Tibial artery (tissue), 4 donors: ENCODE measurements at regions of chr19 and their contacts with region 1.

Region 1: DNA sequence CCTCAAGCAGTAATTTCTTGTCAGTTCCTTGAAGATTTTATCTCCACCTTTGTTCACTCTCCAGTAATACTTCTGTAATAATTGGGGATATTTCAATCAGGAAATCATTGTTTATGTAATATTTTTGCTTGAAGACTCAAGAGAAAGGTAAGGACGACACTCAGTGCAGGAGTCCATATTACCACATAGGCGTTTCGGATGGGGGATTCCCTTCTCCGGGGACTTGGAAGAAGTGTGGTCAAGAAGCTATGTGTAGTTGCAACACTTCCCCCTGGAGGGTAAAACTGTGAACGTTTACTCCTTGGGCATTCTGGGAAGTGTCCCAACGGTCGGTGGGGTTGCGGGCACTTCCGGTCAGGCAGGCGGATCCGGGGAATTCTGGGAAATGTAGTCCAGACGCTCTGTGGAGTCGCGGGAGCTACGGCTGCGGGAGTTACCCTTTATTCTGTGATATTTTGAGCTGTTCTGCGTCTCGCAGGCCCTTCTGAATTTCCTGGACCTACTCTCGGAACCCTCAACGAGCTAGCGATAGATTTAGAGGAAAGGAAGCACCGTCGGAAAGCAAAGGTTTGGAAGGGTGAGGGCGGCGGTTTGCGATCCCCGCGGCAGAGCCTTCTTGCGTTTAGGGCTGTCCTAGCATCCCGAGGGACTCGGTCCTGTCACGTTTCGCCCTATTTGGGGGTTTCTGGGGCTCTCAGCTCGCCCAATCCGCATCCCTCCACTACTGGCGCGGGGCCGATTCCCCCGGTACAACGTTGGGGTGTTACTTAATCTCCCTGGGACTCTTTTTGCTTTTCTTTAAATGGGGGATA is at the start of gene ZNF221:
- DNase-seq: peak; percentile 89 to 93
- H3K4me3 ChIP-seq: peak within 1 kb of the TSS; percentile 77 to 78
- H3K27ac ChIP-seq: peak within 1 kb of the TSS; percentile 78 to 81
- H3K4me1 ChIP-seq: peaks cover 0 to 2% (median 0%) of the 10 kb centered on the region in 4 donors
- H3K27me3 ChIP-seq: no peaks in the 10 kb centered on the region
- CTCF ChIP-seq: peak; percentile 35 to 41

Region 2: GRCh38 chr19:44051654-44052402 is 100.8 kb after region 1 on chr19 and contains the start of gene ZNF223:
- intact Hi-C with region 1: loop called (anchors 2 kb)
- DNase-seq: peak; percentile 96 to 98
- H3K4me3 ChIP-seq: peak within 1 kb of the TSS; percentile 63 to 91
- H3K27ac ChIP-seq: peak within 1 kb of the TSS; percentile 69 to 77
- H3K4me1 ChIP-seq: peaks cover 0 to 19% (median 12%) of the 10 kb centered on the region in 4 donors
- H3K27me3 ChIP-seq: peaks cover 0 to 4% of the 10 kb centered on the region in 2 donors
- CTCF ChIP-seq: no peak